WTC11 (cell line): ENCODE measurements at regions of chr5 and their contacts with region 1.

Region 1: GRCh38 chr5:73170522-73170921 is 2.5 kb upstream of the TMEM174 start:
- DNase-seq: peak; percentile 64
- ATAC-seq: peak; percentile 90
- H3K4me3 Mint-ChIP-seq: no peak overlapping the region
- H3K27ac Mint-ChIP-seq: no peak overlapping the region
- H3K4me1 Mint-ChIP-seq: peaks cover 20% of the 10 kb centered on the region
- H3K27me3 Mint-ChIP-seq: no peaks in the 10 kb centered on the region
- CTCF ChIP-seq: no peak; the same call in 1 of the 2 replicates

Region 2: DNA sequence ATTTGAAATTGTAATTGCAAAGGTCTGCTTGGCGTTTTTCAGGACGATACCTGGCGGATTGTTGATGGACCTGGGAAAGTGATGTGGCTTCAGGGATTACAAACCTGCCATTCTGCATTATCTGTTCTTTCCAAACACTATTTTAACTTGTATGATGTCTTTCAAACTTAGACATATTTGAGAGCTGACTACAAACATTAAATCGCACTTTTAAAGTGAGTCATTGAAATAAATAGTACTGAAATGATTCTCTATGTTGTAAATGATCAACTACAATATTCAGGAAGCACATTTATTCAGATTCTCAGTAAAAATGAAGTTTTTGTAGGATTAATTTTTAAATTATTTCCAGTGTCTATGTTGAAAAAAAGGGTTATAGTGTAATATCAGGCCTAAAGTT is 82.5 kb before region 1 on chr5:
- CTCF ChIA-PET with region 1: interaction called, 13 read pairs
- POLR2A ChIA-PET with region 1: no interaction called
- DNase-seq: no peak
- ATAC-seq: no peak
- H3K4me3 Mint-ChIP-seq: no peak overlapping the region
- H3K27ac Mint-ChIP-seq: no peak overlapping the region
- H3K4me1 Mint-ChIP-seq: 0 out of 2 replicates have a peak, but pooled peaks cover 2% of the 10 kb centered on the region
- H3K27me3 Mint-ChIP-seq: no peaks in the 10 kb centered on the region
- CTCF ChIP-seq: no peak

Region 3: DNA sequence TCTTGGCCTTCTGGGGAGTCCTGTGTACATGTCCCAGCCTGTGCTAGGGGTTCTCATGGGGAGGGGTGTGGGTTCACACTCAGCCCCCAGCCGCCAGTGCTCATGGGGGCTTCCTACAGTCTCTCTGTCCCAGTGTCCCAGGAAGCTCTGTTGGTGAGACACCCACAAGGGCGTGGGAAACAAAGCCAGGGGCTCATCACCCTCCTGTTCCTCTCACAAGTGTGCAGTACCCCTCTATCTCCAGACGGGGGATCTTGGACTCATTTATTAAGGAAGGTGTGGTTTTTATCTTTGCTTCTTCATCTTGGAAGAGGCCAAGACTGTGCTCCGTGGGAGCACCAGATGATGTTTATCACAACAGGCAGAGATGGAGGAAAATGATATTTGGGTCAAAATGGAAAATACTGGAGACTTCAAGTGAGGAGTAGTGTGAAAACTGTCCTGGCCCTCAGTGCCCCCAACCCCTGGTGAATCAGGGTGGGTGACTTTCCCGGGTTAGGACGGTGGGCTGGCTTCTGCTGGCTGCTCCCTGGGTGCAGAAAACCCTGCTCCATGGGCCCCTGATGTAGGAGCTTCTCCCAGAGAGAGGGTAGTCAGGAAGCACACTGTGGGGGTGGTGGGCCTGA is 35.0 kb before region 1 on chr5:
- CTCF ChIA-PET with region 1: interaction called, 15 read pairs
- POLR2A ChIA-PET with region 1: no interaction called
- DNase-seq: peak; percentile 31
- ATAC-seq: peak; percentile 77
- H3K4me3 Mint-ChIP-seq: no peak overlapping the region
- H3K27ac Mint-ChIP-seq: no peak overlapping the region
- H3K4me1 Mint-ChIP-seq: peaks cover 27% of the 10 kb centered on the region
- H3K27me3 Mint-ChIP-seq: no peaks in the 10 kb centered on the region
- CTCF ChIP-seq: peak; percentile 39; the same call in 1 of the 2 replicates

Region 4: DNA sequence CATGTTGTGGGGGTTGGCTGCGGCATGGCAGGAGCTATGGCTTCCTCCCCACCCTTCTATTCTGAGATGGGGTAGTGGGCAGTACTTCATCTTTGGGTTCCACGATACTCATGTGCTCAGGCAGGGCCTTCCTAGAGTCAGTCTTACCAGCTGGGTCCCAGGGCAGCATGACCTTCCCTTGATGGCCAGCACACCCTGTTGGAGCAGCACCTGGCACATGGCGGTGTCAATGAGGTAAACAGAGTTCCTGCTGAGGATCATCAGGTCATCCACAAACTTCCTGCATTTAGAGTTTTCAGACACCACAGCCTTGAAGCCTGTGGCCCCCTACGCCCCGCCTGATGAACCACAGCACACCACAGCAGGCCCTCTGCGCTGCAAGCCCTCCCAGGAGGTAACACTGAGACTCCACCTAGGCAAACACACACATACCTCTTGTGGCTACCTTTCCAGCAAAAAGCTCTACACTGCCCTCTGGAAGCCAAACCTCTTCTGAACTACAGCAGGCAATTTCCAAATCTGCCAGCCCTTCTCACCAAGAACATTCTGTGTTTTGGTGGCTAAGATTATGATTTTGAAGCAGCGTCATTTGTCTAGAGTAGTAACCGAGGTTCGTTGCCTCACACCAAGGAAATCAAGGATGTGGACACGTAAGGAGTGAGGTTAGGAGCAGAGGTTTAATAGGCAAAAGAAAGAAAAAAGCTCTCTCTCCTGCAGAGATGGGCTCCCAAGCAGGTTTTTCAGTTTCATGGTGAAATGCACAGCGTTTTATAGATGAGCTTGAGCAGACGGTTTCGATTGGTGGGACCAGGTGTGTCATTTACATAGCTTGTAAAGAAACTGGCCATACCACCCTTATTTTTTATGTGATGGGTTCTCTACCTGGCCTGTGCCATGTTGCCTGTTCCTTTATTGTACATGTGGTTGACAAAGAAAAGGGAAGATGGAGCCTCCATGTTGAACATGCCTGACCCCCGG is 17.8 kb before region 1 on chr5:
- CTCF ChIA-PET with region 1: interaction called, 14 read pairs
- POLR2A ChIA-PET with region 1: no interaction called
- DNase-seq: no peak
- ATAC-seq: peak; percentile 80
- H3K4me3 Mint-ChIP-seq: no peak overlapping the region
- H3K27ac Mint-ChIP-seq: no peak overlapping the region
- H3K4me1 Mint-ChIP-seq: peaks cover 13% of the 10 kb centered on the region
- H3K27me3 Mint-ChIP-seq: no peaks in the 10 kb centered on the region
- CTCF ChIP-seq: no peak

Region 5: DNA sequence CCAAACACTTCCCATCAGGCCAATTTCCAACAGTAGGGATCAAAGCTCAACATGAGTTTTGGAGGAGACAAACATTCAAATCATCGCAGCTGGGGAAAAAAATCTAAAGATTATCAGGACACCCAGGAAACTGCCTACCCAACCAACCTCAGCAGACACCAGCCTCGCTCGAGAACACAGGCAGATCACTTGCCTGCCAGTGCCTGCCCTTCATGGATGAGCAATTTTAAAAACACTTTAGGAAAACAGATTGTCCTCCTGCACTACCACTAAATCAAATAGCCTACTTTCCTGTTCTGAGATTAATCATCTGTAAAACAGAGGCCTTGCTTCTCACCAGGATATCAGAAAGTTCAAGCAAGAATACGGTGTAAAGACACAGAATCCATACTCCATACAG is 12.2 kb before region 1 on chr5:
- CTCF ChIA-PET with region 1: interaction called, 14 read pairs
- POLR2A ChIA-PET with region 1: no interaction called
- DNase-seq: no peak
- ATAC-seq: no peak
- H3K4me3 Mint-ChIP-seq: no peak overlapping the region
- H3K27ac Mint-ChIP-seq: no peak overlapping the region
- H3K4me1 Mint-ChIP-seq: peaks cover 10% of the 10 kb centered on the region
- H3K27me3 Mint-ChIP-seq: no peaks in the 10 kb centered on the region
- CTCF ChIP-seq: no peak